Common myeloid progenitor, CD34-positive (primary cell): ENCODE measurements at regions of chr2 and their contacts with region 1.

Region 1: GRCh38 chr2:26922405-26923188 is 47.8 kb upstream of the MAPRE3 start:
- DNase-seq: peak; percentile 61 to 78 (median 75)
- H3K4me3 ChIP-seq: no peak overlapping the region
- H3K27ac ChIP-seq: no peak overlapping the region
- H3K4me1 ChIP-seq: peaks cover 0 to 6% (median 3%) of the 10 kb centered on the region in 4 experiments
- H3K27me3 ChIP-seq: peaks cover 0 to 2% (median 0%) of the 10 kb centered on the region in 5 experiments

Region 2: GRCh38 chr2:26612522-26613240 is 309.9 kb before region 1 on chr2:
- CTCF ChIA-PET with region 1: no interaction called
- POLR2A ChIA-PET with region 1: no interaction called
- DNase-seq: peak; percentile 11 to 32 (median 20)
- H3K4me3 ChIP-seq: no peak overlapping the region
- H3K27ac ChIP-seq: no peak overlapping the region
- H3K4me1 ChIP-seq: peaks cover 0 to 2% (median 0%) of the 10 kb centered on the region in 4 experiments
- H3K27me3 ChIP-seq: no peaks in the 10 kb centered on the region

Region 3: GRCh38 chr2:26745609-26746327 is 176.8 kb before region 1 on chr2:
- CTCF ChIA-PET with region 1: no interaction called
- POLR2A ChIA-PET with region 1: no interaction called
- DNase-seq: peak; percentile 83 to 91 (median 87)
- H3K4me3 ChIP-seq: no peak overlapping the region
- H3K27ac ChIP-seq: no peak overlapping the region
- H3K4me1 ChIP-seq: peaks cover 0 to 22% (median 20%) of the 10 kb centered on the region in 4 experiments
- H3K27me3 ChIP-seq: peaks cover 0 to 8% (median 4%) of the 10 kb centered on the region in 5 experiments

Region 4: GRCh38 chr2:26816893-26817292 is 105.7 kb before region 1 on chr2:
- CTCF ChIA-PET with region 1: no interaction called
- POLR2A ChIA-PET with region 1: no interaction called
- DNase-seq: no peak
- H3K4me3 ChIP-seq: no peak overlapping the region
- H3K27ac ChIP-seq: no peak overlapping the region
- H3K4me1 ChIP-seq: peaks cover 0 to 3% (median 0%) of the 10 kb centered on the region in 4 experiments
- H3K27me3 ChIP-seq: peaks cover 0 to 3% (median 0%) of the 10 kb centered on the region in 5 experiments

Region 5: GRCh38 chr2:26852405-26853306 is 69.9 kb before region 1 on chr2:
- CTCF ChIA-PET with region 1: interaction called, 53 read pairs
- POLR2A ChIA-PET with region 1: no interaction called
- DNase-seq: no peak
- H3K4me3 ChIP-seq: no peak overlapping the region
- H3K27ac ChIP-seq: no peak overlapping the region
- H3K4me1 ChIP-seq: peaks cover 0 to 24% (median 20%) of the 10 kb centered on the region in 4 experiments
- H3K27me3 ChIP-seq: peaks cover 16 to 60% (median 22%) of the 10 kb centered on the region in 5 experiments